ENCODE measurements at regions of chr10 and their contacts with region 1.

Region 1: GRCh38 chr10:11036407-11037011 is 18.8 kb downstream of the CELF2 start:
- DNase-seq: peak; percentile 62
- ATAC-seq: peak; percentile 86
- H3K4me3 ChIP-seq: no peak overlapping the region
- H3K27ac ChIP-seq: no peak overlapping the region
- H3K4me1 ChIP-seq: no peaks in the 10 kb centered on the region
- H3K27me3 ChIP-seq: peaks cover 2% of the 10 kb centered on the region; the same call in 1 of the 2 replicates
- CTCF ChIP-seq: peak; percentile 71
- POLR2A ChIP-seq: no peak
- RAD21 ChIP-seq: peak; percentile 85

Region 2: GRCh38 chr10:9331583-9332008 is 1704.9 kb before region 1 on chr10:
- CTCF ChIA-PET with region 1: no interaction called
- POLR2A ChIA-PET with region 1: no interaction called
- dilution Hi-C with region 1: no loop called
- in situ Hi-C with region 1: loop called (anchors 10 kb)
- intact Hi-C with region 1: no loop called
- DNase-seq: peak; percentile 65
- ATAC-seq: peak; percentile 77
- H3K4me3 ChIP-seq: no peak overlapping the region
- H3K27ac ChIP-seq: no peak overlapping the region
- H3K4me1 ChIP-seq: no peaks in the 10 kb centered on the region
- H3K27me3 ChIP-seq: no peaks in the 10 kb centered on the region; the same call in 1 of the 2 replicates
- CTCF ChIP-seq: peak; percentile 92
- POLR2A ChIP-seq: no peak
- RAD21 ChIP-seq: peak; percentile 80

Region 3: DNA sequence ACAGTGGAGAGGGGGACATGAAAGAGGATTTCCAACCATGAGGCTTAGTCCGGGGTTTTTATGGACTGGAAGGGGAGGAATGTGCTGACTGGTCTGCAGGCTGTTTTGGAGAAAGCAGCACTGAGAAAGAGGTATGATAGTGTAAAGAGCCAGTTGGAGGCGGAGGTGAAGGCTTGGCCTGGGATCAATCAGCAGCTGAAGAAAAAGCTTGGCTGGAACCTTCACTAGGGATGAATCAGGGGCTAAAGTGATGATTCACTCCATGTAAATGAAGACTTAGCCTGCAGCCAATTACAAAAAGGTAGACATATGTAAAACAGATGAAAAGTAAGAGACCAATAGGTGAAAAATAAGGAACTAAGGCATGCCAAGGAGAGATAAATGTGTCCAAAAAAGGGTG is 1599.4 kb before region 1 on chr10:
- CTCF ChIA-PET with region 1: no interaction called
- POLR2A ChIA-PET with region 1: no interaction called
- dilution Hi-C with region 1: no loop called
- in situ Hi-C with region 1: no loop called
- intact Hi-C with region 1: loop called (anchors 10 kb)
- DNase-seq: peak; percentile 1
- ATAC-seq: peak; percentile 53
- H3K4me3 ChIP-seq: no peak overlapping the region
- H3K27ac ChIP-seq: no peak overlapping the region
- H3K4me1 ChIP-seq: no peaks in the 10 kb centered on the region
- H3K27me3 ChIP-seq: no peaks in the 10 kb centered on the region
- CTCF ChIP-seq: no peak
- POLR2A ChIP-seq: no peak
- RAD21 ChIP-seq: no peak

Region 4: GRCh38 chr10:10662716-10663408 is 373.6 kb before region 1 on chr10:
- CTCF ChIA-PET with region 1: no interaction called
- POLR2A ChIA-PET with region 1: no interaction called
- dilution Hi-C with region 1: no loop called
- in situ Hi-C with region 1: no loop called
- intact Hi-C with region 1: loop called (anchors 5 kb)
- DNase-seq: no peak
- ATAC-seq: no peak
- H3K4me3 ChIP-seq: no peak overlapping the region
- H3K27ac ChIP-seq: no peak overlapping the region
- H3K4me1 ChIP-seq: peaks cover 9% of the 10 kb centered on the region
- H3K27me3 ChIP-seq: no peaks in the 10 kb centered on the region
- CTCF ChIP-seq: no peak
- POLR2A ChIP-seq: no peak
- RAD21 ChIP-seq: no peak

Region 5: DNA sequence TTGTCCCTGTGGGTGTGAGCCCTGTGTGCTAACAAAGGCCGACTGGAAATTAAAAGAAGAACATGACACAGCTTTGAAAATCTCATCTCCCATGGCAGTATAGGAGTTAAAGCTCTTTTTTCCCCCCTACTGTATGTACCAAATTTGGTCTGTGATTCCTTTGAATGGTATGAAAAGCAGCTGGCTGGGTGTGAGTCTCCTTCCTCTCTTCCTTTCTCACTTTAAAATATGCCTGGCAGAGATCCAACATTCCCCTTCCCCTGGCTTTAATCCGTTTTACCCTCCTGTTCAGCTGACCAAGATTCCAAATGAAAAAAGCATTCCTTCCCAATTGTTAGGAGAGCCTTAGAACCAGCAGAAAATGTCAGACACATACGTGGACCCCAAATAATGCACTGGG is 243.8 kb before region 1 on chr10:
- CTCF ChIA-PET with region 1: no interaction called
- POLR2A ChIA-PET with region 1: no interaction called
- dilution Hi-C with region 1: no loop called
- in situ Hi-C with region 1: no loop called
- intact Hi-C with region 1: loop called (anchors 5 kb)
- DNase-seq: peak; percentile 86
- ATAC-seq: peak; percentile 86
- H3K4me3 ChIP-seq: no peak overlapping the region
- H3K27ac ChIP-seq: peak overlapping the region; percentile 53
- H3K4me1 ChIP-seq: peaks cover 15% of the 10 kb centered on the region
- H3K27me3 ChIP-seq: no peaks in the 10 kb centered on the region
- CTCF ChIP-seq: no peak
- POLR2A ChIP-seq: no peak
- RAD21 ChIP-seq: no peak

Measured in IMR-90 (cell line).